Activated naive CD4-positive, alpha-beta T cell treated with anti-CD3 and anti-CD28 coated beads for 36 hours (primary cell): ENCODE measurements at regions of chr16 and their contacts with region 1.

Region 1: GRCh38 chr16:66650707-66651473 is 45.7 kb downstream of the CMTM4 start:
- DNase-seq: peak; percentile 93
- H3K4me3 Mint-ChIP-seq: peak overlapping the region; percentile 68
- H3K27ac Mint-ChIP-seq: no peak overlapping the region
- H3K4me1 Mint-ChIP-seq: peaks cover 13% of the 10 kb centered on the region
- H3K27me3 Mint-ChIP-seq: no peaks in the 10 kb centered on the region

Region 2: DNA sequence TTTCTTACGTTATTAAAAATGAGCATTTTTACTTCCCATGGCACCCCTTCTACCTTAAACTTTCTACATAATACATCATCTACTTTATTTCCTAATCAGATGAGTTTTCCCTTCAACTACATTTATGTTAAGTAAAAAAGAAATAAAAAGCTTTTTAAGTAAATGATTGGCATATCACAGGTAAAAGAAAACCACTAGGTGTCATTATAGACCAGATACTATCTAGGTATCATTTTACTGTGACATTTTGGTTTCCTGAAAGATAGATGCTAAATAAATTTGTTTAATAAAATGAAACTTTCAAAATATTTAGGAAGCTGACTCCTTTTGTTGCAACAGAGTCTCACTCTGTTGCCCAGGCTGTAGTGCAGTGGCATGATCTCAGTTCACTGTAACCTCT is 88.5 kb before region 1 on chr16:
- CTCF ChIA-PET with region 1: no interaction called
- intact Hi-C with region 1: loop called (anchors 5 kb)
- DNase-seq: no peak
- H3K4me3 Mint-ChIP-seq: no peak overlapping the region
- H3K27ac Mint-ChIP-seq: no peak overlapping the region
- H3K4me1 Mint-ChIP-seq: peaks cover 55% of the 10 kb centered on the region
- H3K27me3 Mint-ChIP-seq: no peaks in the 10 kb centered on the region

Region 3: DNA sequence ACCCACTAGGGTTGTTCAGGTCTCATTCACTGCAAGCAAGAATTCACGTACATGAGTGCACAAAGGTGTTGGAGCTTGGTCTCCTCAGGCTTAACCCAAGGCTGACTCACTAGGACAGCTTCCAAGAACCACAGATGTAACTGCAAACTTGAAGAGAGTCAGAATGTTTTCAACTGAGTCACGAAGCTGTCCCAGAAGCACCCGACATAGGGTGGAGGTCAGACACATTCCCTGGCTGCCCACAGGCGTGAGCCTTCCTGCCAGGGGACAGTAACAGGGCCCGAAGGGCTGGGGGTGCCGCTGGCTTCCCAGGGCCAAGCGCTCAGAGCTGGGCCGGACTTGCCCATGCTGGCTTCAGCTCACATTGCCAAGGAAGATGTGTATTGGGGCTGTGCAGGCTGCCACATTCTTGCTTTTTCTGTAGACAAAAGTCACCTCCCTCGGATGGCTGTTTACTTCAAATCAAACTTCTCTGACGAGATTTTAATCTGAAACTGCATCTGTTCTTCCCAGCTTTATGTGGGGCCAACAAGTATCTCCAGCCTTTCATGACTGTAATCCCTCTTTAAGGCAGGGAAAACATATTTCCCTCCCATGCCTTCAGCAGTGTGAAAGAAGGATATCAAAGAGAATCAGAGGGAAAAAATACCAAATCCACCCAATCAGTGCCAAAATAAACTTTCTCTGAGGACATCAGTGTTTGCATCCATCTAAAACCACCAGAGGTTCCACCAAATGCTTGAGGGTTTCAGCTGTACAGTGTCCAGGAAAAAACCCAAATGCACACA is 32.1 kb before region 1 on chr16:
- CTCF ChIA-PET with region 1: interaction called, 10 read pairs
- intact Hi-C with region 1: no loop called
- DNase-seq: no peak
- H3K4me3 Mint-ChIP-seq: no peak overlapping the region
- H3K27ac Mint-ChIP-seq: no peak overlapping the region
- H3K4me1 Mint-ChIP-seq: peaks cover 2% of the 10 kb centered on the region
- H3K27me3 Mint-ChIP-seq: no peaks in the 10 kb centered on the region

Region 4: GRCh38 chr16:66677179-66677578 is 26.3 kb after region 1 on chr16:
- CTCF ChIA-PET with region 1: interaction called, 10 read pairs
- intact Hi-C with region 1: no loop called
- DNase-seq: no peak
- H3K4me3 Mint-ChIP-seq: no peak overlapping the region
- H3K27ac Mint-ChIP-seq: no peak overlapping the region
- H3K4me1 Mint-ChIP-seq: no peaks in the 10 kb centered on the region
- H3K27me3 Mint-ChIP-seq: no peaks in the 10 kb centered on the region

Region 5: DNA sequence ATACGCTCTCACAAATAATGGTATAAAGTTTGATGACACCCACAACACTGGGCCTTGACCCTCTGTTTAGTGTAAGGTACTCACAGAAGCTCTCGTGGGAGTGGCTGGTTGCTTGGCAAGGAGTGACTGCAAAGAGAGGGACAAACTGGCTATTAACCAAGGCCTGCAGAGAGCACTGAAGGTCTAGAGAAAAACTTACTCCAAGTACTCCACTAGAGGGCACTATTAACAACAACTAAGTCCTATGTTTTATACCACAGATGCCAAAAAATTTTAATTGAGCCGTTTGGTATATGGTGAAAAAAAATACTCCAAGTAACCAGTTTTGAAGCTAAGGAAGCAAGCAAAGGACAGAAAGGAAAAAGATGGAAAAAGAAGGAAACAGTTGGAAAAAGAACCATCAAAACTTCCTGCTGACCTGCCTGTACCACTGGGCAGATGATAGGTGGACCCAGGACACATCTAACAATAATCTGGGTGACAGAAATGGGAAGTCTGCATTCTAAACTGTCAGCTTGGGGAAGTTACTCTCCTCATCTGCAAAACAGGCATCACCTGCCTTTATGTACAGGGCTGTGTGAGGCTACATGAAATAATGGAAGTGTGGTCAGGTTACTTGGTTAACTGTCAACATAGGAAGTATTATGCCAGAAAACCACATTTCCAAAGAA is 77.4 kb after region 1 on chr16:
- CTCF ChIA-PET with region 1: interaction called, 16 read pairs
- intact Hi-C with region 1: no loop called
- DNase-seq: peak; percentile 12
- H3K4me3 Mint-ChIP-seq: no peak overlapping the region
- H3K27ac Mint-ChIP-seq: no peak overlapping the region
- H3K4me1 Mint-ChIP-seq: no peaks in the 10 kb centered on the region
- H3K27me3 Mint-ChIP-seq: no peaks in the 10 kb centered on the region

Region 6: DNA sequence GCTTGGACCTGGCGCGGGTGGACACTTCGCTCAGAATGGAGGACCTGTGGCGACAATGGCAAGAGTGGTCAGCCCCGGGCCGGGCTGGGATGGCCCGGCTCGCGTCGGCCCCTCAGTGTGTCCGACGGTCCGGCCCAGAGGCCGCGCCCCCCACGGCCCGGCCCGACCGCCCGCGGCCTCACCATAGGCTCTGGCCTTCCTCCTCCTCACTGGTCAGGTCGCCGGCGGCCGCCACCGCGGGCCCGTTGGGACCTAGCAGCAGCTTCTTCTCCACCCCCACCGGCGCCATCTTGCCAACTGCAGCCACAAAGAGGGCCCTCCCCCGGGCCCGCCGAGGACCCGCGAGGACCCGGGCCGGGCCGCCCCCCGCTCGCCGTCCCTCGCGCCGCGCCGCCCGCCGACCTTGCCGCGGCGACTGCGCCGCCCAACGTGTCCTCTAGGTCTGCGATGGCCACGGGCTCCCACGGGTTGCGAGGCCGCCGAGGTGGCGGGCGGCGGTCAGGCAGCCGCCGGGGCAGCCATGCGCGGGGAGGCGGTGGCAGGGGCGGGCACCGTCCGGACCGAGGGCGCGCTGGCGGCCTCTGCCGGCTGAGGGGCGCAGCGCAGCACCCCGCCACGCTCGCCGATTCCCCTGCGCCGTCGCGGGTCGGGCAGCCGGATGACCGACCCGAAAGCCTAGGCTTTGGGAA is 100.6 kb after region 1 on chr16 and contains the start of gene DYNC1LI2:
- CTCF ChIA-PET with region 1: interaction called, 5 read pairs
- intact Hi-C with region 1: loop called (anchors 1 kb)
- DNase-seq: peak; percentile 82
- H3K4me3 Mint-ChIP-seq: peak within 1 kb of the TSS; percentile 88
- H3K27ac Mint-ChIP-seq: peak within 1 kb of the TSS; percentile 78
- H3K4me1 Mint-ChIP-seq: peaks cover 36% of the 10 kb centered on the region
- H3K27me3 Mint-ChIP-seq: peaks cover 3% of the 10 kb centered on the region
- total RNA-seq, gene DYNC1LI2: 30.8 to 31.0 TPM

Region 7: DNA sequence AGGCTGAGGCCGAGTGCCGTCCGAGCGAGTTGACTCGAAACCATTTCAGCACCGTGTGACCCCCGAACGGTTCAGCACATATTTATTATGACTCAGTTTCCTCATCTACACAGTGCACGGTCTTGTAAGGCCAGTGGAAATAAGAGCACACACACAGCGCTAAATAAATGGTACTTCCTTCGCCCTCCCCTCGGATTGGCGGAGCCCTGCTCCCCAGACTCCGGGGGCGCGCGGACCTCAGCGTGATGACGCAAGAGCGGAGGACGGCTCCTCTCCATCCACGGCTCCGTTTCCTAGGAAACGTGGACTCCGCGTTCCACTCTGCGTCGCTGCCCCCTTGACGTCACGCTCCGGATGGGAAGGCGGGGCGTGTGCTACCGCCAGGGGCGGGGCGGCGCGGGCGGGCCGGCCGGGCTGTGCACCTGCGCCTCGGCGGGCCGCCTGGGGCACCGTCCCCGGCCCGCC is 1009.7 kb after region 1 on chr16 and contains the start of gene PARD6A:
- CTCF ChIA-PET with region 1: no interaction called
- intact Hi-C with region 1: no loop called
- DNase-seq: peak; percentile 97
- H3K4me3 Mint-ChIP-seq: peak within 1 kb of the TSS; percentile 90
- H3K27ac Mint-ChIP-seq: peak within 1 kb of the TSS; percentile 92
- H3K4me1 Mint-ChIP-seq: peaks cover 21% of the 10 kb centered on the region
- H3K27me3 Mint-ChIP-seq: no peaks in the 10 kb centered on the region
- total RNA-seq, gene PARD6A: 7.3 to 8.4 TPM